ENCODE measurements at regions of chr15 and their contacts with region 1.

Region 1: GRCh38 chr15:88620995-88621772 is at the start of gene AEN:
- DNase-seq: peak; percentile 86
- ATAC-seq: peak; percentile 89
- H3K4me3 ChIP-seq: peak within 1 kb of the TSS; percentile 83
- H3K27ac ChIP-seq: peak within 1 kb of the TSS; percentile 97
- H3K4me1 ChIP-seq: peaks cover 34% of the 10 kb centered on the region
- H3K27me3 ChIP-seq: no peaks in the 10 kb centered on the region
- CTCF ChIP-seq: no peak
- EP300 ChIP-seq: no peak
- POLR2A ChIP-seq: peak; percentile 92
- RAD21 ChIP-seq: no peak
- polyA plus RNA-seq, gene AEN: 11.7 to 12.0 TPM

Region 2: GRCh38 chr15:88546248-88547129 is 74.7 kb before region 1 on chr15 and contains the start of gene DET1:
- CTCF ChIA-PET with region 1: interaction called, 7 read pairs
- POLR2A ChIA-PET with region 1: no interaction called
- RAD21 ChIA-PET with region 1: no interaction called
- SMC1A ChIA-PET with region 1: no interaction called
- in situ Hi-C with region 1: no loop called
- intact Hi-C with region 1: loop called (anchors 5 kb)
- DNase-seq: peak; percentile 93
- ATAC-seq: peak; percentile 98
- H3K4me3 ChIP-seq: peak within 1 kb of the TSS; percentile 84
- H3K27ac ChIP-seq: peak within 1 kb of the TSS; percentile 83
- H3K4me1 ChIP-seq: no peaks in the 10 kb centered on the region; the same call in 1 of the 2 replicates
- H3K27me3 ChIP-seq: no peaks in the 10 kb centered on the region
- CTCF ChIP-seq: peak; percentile 86 to 94 (median 90); a peak in 5 of 6 replicates
- EP300 ChIP-seq: no peak; a peak in 1 of 4 replicates
- POLR2A ChIP-seq: peak; percentile 54
- RAD21 ChIP-seq: peak; percentile 23; the same call in 1 of the 2 replicates
- polyA plus RNA-seq, gene DET1: 0.16 to 0.50 TPM

Region 3: DNA sequence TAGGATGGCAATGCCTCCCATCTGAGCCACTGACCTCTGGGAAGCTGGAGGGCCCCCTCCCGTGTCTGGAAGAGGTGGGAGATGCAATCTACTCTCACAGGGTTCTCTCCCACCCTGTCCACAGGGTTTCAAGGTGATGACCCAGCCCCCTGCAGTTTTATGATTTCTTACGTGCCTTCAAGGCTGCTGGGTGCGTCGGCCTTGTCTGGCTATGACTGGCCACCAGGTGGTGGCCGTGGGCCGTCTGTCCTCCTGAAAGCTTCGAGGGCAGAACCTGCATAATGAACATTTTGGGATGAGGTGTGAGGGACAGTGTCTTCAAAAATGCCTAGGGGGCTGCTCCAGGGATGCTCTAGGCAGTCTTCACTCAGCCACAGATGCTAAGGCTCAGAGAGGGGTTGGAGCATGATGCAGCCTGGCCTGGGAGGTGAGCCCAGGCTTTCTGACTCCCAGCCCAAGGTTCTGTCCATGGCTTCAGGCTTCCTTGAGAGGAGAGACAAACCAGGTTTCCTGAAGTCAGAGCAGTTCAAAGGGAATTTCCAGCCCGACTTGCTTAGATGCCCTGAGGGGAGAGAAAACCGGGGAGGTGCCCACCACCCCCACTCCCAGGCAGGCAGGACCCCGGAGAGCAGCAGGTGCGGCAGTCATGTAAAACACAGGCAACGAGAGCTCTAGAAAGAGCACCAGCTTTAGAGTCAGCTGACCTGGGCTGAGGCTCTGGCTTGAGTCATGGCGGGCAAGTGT is 36.3 kb after region 1 on chr15:
- CTCF ChIA-PET with region 1: interaction called, 61 read pairs
- POLR2A ChIA-PET with region 1: interaction called, 3 read pairs
- RAD21 ChIA-PET with region 1: interaction called, 40 read pairs
- SMC1A ChIA-PET with region 1: interaction called, 37 read pairs
- in situ Hi-C with region 1: no loop called
- intact Hi-C with region 1: loop called (anchors 2 kb)
- DNase-seq: no peak
- ATAC-seq: peak; percentile 71
- H3K4me3 ChIP-seq: no peak overlapping the region
- H3K27ac ChIP-seq: no peak overlapping the region
- H3K4me1 ChIP-seq: peaks cover 15% of the 10 kb centered on the region
- H3K27me3 ChIP-seq: no peaks in the 10 kb centered on the region
- CTCF ChIP-seq: peak; percentile 52 to 60 (median 55)
- EP300 ChIP-seq: no peak
- POLR2A ChIP-seq: no peak
- RAD21 ChIP-seq: peak; percentile 75

Region 4: DNA sequence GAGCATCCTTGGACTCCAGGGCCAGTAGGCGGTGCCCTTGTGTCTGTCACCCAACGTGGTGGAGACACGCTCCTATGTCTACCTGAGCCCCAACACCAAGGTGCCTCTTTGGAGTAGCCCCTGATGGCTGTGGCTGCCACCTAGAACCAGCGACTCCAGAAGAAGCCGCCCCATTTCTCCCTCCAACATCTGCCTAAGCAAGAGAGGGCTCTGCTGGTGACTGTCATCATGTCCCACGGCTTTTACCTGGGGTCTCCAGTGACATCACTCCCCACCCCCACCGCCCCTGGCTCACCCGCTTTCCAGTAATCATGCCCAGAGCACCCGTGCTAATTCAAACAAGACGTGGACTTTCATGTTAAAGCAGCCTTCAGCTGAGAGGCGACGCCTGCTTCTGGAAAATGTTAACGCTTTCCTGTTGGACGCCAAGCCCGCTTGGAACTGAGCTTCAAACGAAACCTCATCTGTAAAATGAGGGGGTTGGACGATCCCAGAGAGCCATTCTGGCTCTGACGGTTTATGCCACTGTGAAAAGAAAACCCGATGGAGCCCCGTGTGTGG is 74.6 kb after region 1 on chr15:
- CTCF ChIA-PET with region 1: interaction called, 52 read pairs
- POLR2A ChIA-PET with region 1: interaction called, 3 read pairs
- RAD21 ChIA-PET with region 1: interaction called, 19 read pairs
- SMC1A ChIA-PET with region 1: interaction called, 26 read pairs
- in situ Hi-C with region 1: loop called (anchors 5 kb)
- intact Hi-C with region 1: no loop called
- DNase-seq: no peak
- ATAC-seq: no peak
- H3K4me3 ChIP-seq: no peak overlapping the region
- H3K27ac ChIP-seq: no peak overlapping the region
- H3K4me1 ChIP-seq: no peaks in the 10 kb centered on the region
- H3K27me3 ChIP-seq: no peaks in the 10 kb centered on the region; a peak in 2 of 4 replicates
- CTCF ChIP-seq: no peak
- EP300 ChIP-seq: no peak
- POLR2A ChIP-seq: no peak
- RAD21 ChIP-seq: no peak

Region 5: DNA sequence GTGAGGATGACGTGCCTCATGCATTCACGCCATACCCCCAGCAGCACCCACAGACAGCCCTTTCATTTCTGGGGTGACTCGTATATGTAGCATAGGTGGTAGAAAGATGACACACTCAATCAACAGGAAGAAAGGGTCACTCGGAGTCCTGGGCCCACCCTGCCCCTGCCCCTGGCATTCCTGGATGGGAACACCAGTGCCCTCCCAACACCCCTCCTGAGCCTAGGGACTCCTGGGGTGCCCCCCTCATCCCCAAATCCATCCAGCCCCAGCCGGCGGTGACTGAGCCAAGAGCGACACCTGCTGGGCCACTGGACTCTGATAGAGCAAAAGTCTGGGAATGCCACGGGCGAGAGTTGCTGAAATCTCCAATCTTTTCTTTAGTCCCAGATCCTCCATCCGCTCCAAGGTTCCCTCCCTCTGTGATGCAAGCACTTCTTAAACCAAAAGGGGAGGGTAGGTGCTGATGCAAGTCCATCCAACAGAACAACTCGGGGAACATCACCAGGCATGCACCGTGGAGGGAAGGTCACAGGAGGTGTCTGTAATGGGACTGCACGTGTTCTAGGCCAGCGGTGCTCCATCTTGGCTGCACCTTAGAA is 213.1 kb after region 1 on chr15:
- CTCF ChIA-PET with region 1: interaction called, 30 read pairs
- POLR2A ChIA-PET with region 1: no interaction called
- RAD21 ChIA-PET with region 1: interaction called, 10 read pairs
- SMC1A ChIA-PET with region 1: interaction called, 22 read pairs
- in situ Hi-C with region 1: no loop called
- intact Hi-C with region 1: loop called (anchors 2 kb)
- DNase-seq: no peak
- ATAC-seq: peak; percentile 81
- H3K4me3 ChIP-seq: no peak overlapping the region
- H3K27ac ChIP-seq: no peak overlapping the region
- H3K4me1 ChIP-seq: no peaks in the 10 kb centered on the region
- H3K27me3 ChIP-seq: no peaks in the 10 kb centered on the region; a peak in 1 of 4 replicates
- CTCF ChIP-seq: peak; percentile 37 to 53 (median 51)
- EP300 ChIP-seq: no peak
- POLR2A ChIP-seq: no peak
- RAD21 ChIP-seq: peak; percentile 61